ENCODE measurements at regions of chr4 and their contacts with region 1.

Region 1: GRCh38 chr4:173420324-173420752 is 21.4 kb upstream of the SCRG1 start:
- DNase-seq: no peak
- ATAC-seq: peak; percentile 71
- H3K4me3 ChIP-seq: no peak overlapping the region
- H3K27ac ChIP-seq: no peak overlapping the region
- H3K4me1 ChIP-seq: no peaks in the 10 kb centered on the region
- H3K27me3 ChIP-seq: no peaks in the 10 kb centered on the region
- CTCF ChIP-seq: peak; percentile 21 to 48 (median 39); a peak in 2 of 6 replicates
- EP300 ChIP-seq: no peak
- POLR2A ChIP-seq: no peak
- RAD21 ChIP-seq: peak; percentile 57

Region 2: GRCh38 chr4:173025131-173025530 is 395.2 kb before region 1 on chr4:
- CTCF ChIA-PET with region 1: interaction called, 6 read pairs
- POLR2A ChIA-PET with region 1: no interaction called
- RAD21 ChIA-PET with region 1: interaction called, 4 read pairs
- SMC1A ChIA-PET with region 1: interaction called, 4 read pairs
- in situ Hi-C with region 1: no loop called
- intact Hi-C with region 1: loop called (anchors 5 kb)
- DNase-seq: peak; percentile 16
- ATAC-seq: peak; percentile 95
- H3K4me3 ChIP-seq: no peak overlapping the region
- H3K27ac ChIP-seq: no peak overlapping the region
- H3K4me1 ChIP-seq: no peaks in the 10 kb centered on the region
- H3K27me3 ChIP-seq: no peaks in the 10 kb centered on the region; a peak in 1 of 4 replicates
- CTCF ChIP-seq: peak; percentile 54 to 63 (median 58); a peak in 5 of 6 replicates
- EP300 ChIP-seq: no peak
- POLR2A ChIP-seq: no peak
- RAD21 ChIP-seq: peak; percentile 91

Region 3: DNA sequence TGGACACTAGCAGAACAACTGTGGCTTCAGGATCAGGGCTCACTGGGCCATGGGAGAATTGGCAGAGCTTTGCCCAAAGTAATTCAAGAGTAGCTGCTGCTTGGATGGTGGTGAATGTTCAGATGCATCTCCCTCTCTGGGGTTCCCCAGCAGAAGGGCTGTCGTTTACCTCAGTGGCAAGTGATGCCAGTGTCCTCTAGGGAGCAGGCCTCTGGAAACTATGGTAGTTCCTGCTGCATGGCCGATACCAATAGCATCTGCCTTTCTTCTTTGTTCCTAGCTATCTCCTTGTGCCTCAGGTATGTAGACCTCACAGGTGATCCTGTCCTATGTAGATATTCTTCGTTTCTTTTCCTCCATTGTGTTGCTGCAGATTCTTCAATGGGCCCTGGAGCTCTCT is 112.6 kb before region 1 on chr4:
- CTCF ChIA-PET with region 1: interaction called, 11 read pairs
- POLR2A ChIA-PET with region 1: no interaction called
- RAD21 ChIA-PET with region 1: interaction called, 4 read pairs
- SMC1A ChIA-PET with region 1: interaction called, 3 read pairs
- in situ Hi-C with region 1: loop called (anchors 5 kb)
- intact Hi-C with region 1: no loop called
- DNase-seq: no peak
- ATAC-seq: no peak
- H3K4me3 ChIP-seq: no peak overlapping the region
- H3K27ac ChIP-seq: no peak overlapping the region
- H3K4me1 ChIP-seq: no peaks in the 10 kb centered on the region
- H3K27me3 ChIP-seq: no peaks in the 10 kb centered on the region
- CTCF ChIP-seq: no peak
- EP300 ChIP-seq: no peak
- POLR2A ChIP-seq: no peak
- RAD21 ChIP-seq: no peak

Region 4: GRCh38 chr4:173334085-173334772 is 86.1 kb before region 1 on chr4 and contains the start of gene HMGB2:
- CTCF ChIA-PET with region 1: interaction called, 24 read pairs
- POLR2A ChIA-PET with region 1: interaction called, 4 read pairs
- RAD21 ChIA-PET with region 1: interaction called, 4 read pairs
- SMC1A ChIA-PET with region 1: interaction called, 4 read pairs
- in situ Hi-C with region 1: no loop called
- intact Hi-C with region 1: no loop called
- DNase-seq: peak; percentile 99
- ATAC-seq: peak; percentile 92
- H3K4me3 ChIP-seq: peak within 1 kb of the TSS; percentile 94
- H3K27ac ChIP-seq: peak within 1 kb of the TSS; percentile 100
- H3K4me1 ChIP-seq: peaks cover 6% of the 10 kb centered on the region
- H3K27me3 ChIP-seq: no peaks in the 10 kb centered on the region
- CTCF ChIP-seq: no peak
- EP300 ChIP-seq: no peak; a peak in 1 of 4 replicates
- POLR2A ChIP-seq: peak; percentile 98
- RAD21 ChIP-seq: no peak
- polyA plus RNA-seq, gene HMGB2: 858 to 954 TPM

Region 5: DNA sequence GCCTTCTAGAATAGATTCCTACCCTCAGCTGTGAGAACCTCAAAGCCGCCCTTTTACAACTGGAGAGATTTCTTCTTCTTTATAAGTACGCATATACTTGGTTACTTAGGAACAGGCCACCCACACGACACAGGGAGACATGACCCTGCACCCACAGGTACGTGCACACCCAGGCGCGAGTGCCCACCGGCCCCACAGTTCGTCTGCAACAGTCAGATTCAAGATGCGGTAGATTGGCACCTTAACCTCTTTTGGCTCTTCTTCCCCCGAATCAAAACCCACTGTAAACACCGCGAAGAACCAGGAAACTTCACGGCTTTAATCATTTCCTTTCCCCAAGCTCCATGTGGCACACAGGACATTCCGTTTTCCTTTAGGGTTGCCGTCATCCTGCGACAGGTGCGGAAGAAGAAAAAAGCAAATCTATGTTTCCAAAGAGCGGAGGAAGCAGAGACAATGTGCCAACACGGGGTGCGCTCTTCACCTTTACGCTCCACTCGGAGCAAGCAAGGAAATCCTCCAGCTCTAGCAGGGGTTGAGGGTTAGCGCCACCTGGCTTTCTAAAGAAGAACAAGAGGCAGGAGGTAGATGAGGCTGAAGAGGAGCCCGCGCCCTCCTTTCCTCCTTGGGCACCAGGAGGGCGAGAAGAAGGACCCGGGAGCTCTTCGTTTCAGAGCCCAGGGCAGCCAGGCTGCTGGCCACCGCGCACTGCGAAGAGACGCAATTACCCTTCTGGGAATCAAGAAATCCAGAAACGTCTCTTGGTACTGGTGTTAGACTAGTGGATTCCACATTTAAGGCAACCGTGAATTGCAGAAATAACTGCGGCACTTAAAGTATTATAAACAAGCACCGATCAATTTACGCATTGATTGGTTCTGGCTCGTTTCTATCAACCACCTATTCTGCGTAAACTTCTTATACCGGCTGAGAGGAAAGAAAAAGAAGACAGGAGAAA is 74.0 kb after region 1 on chr4:
- CTCF ChIA-PET with region 1: interaction called, 41 read pairs
- POLR2A ChIA-PET with region 1: no interaction called
- RAD21 ChIA-PET with region 1: interaction called, 15 read pairs
- SMC1A ChIA-PET with region 1: interaction called, 17 read pairs
- in situ Hi-C with region 1: loop called (anchors 10 kb)
- intact Hi-C with region 1: loop called (anchors 1 kb)
- DNase-seq: peak; percentile 27
- ATAC-seq: peak; percentile 99
- H3K4me3 ChIP-seq: peak overlapping the region; percentile 70; the same call in 1 of the 2 replicates
- H3K27ac ChIP-seq: no peak overlapping the region
- H3K4me1 ChIP-seq: peaks cover 4% of the 10 kb centered on the region
- H3K27me3 ChIP-seq: no peaks in the 10 kb centered on the region
- CTCF ChIP-seq: peak; percentile 78 to 91 (median 82)
- EP300 ChIP-seq: no peak
- POLR2A ChIP-seq: no peak
- RAD21 ChIP-seq: peak; percentile 83

Measured in GM12878 (cell line).